MCF 10A (cell line): ENCODE measurements at regions of chr3 and their contacts with region 1.

Region 1: GRCh38 chr3:100725935-100726513 is 16.7 kb downstream of the TFG start:
- DNase-seq: no peak
- H3K4me3 Mint-ChIP-seq: no peak overlapping the region
- H3K27ac Mint-ChIP-seq: no peak overlapping the region
- H3K4me1 Mint-ChIP-seq: peaks cover 8% of the 10 kb centered on the region
- H3K27me3 Mint-ChIP-seq: no peaks in the 10 kb centered on the region
- CTCF ChIP-seq: no peak

Region 2: GRCh38 chr3:100737334-100737733 is 11.3 kb after region 1 on chr3:
- CTCF ChIA-PET with region 1: interaction called, 21 read pairs
- POLR2A ChIA-PET with region 1: interaction called, 4 read pairs
- intact Hi-C with region 1: no loop called
- DNase-seq: peak; percentile 35
- H3K4me3 Mint-ChIP-seq: no peak overlapping the region
- H3K27ac Mint-ChIP-seq: no peak overlapping the region
- H3K4me1 Mint-ChIP-seq: peaks cover 6% of the 10 kb centered on the region
- H3K27me3 Mint-ChIP-seq: no peaks in the 10 kb centered on the region
- CTCF ChIP-seq: peak; percentile 29

Region 3: GRCh38 chr3:100928638-100929428 is 202.8 kb after region 1 on chr3:
- CTCF ChIA-PET with region 1: no interaction called
- POLR2A ChIA-PET with region 1: no interaction called
- intact Hi-C with region 1: no loop called
- DNase-seq: peak; percentile 67
- H3K4me3 Mint-ChIP-seq: no peak overlapping the region
- H3K27ac Mint-ChIP-seq: peak overlapping the region; percentile 8
- H3K4me1 Mint-ChIP-seq: peaks cover 12% of the 10 kb centered on the region
- H3K27me3 Mint-ChIP-seq: no peaks in the 10 kb centered on the region
- CTCF ChIP-seq: no peak